CD8-positive, alpha-beta T cell (primary cell): ENCODE measurements at regions of chr2 and their contacts with region 1.

Region 1: GRCh38 chr2:178163395-178163794 is 30.9 kb upstream of the OSBPL6 start:
- DNase-seq: no peak
- ATAC-seq: no peak
- H3K4me3 ChIP-seq: no peak overlapping the region
- H3K4me3 Mint-ChIP-seq: no peak overlapping the region
- H3K27ac ChIP-seq: no peak overlapping the region
- H3K27ac Mint-ChIP-seq: no peak overlapping the region
- H3K4me1 ChIP-seq: no peaks in the 10 kb centered on the region
- H3K4me1 Mint-ChIP-seq: no peaks in the 10 kb centered on the region
- H3K27me3 ChIP-seq: no peaks in the 10 kb centered on the region
- H3K27me3 Mint-ChIP-seq: peaks cover 10% of the 10 kb centered on the region
- CTCF ChIP-seq: no peak

Region 2: GRCh38 chr2:176601066-176601465 is 1562.3 kb before region 1 on chr2:
- CTCF ChIA-PET with region 1: no interaction called
- POLR2A ChIA-PET with region 1: no interaction called
- intact Hi-C with region 1: loop called in 1 of 2 experiments (anchors 5 kb)
- DNase-seq: no peak
- ATAC-seq: no peak
- H3K4me3 ChIP-seq: no peak overlapping the region
- H3K4me3 Mint-ChIP-seq: no peak overlapping the region
- H3K27ac ChIP-seq: no peak overlapping the region
- H3K27ac Mint-ChIP-seq: no peak overlapping the region
- H3K4me1 ChIP-seq: no peaks in the 10 kb centered on the region
- H3K4me1 Mint-ChIP-seq: no peaks in the 10 kb centered on the region
- H3K27me3 ChIP-seq: peaks cover 0 to 6% of the 10 kb centered on the region in 2 experiments
- H3K27me3 Mint-ChIP-seq: peaks cover 31% of the 10 kb centered on the region
- CTCF ChIP-seq: no peak

Region 3: GRCh38 chr2:178177066-178177679 is 13.8 kb after region 1 on chr2:
- CTCF ChIA-PET with region 1: no interaction called
- POLR2A ChIA-PET with region 1: no interaction called
- intact Hi-C with region 1: no loop called
- DNase-seq: no peak
- ATAC-seq: no peak
- H3K4me3 ChIP-seq: no peak overlapping the region
- H3K4me3 Mint-ChIP-seq: no peak overlapping the region
- H3K27ac ChIP-seq: no peak overlapping the region
- H3K27ac Mint-ChIP-seq: no peak overlapping the region
- H3K4me1 ChIP-seq: no peaks in the 10 kb centered on the region
- H3K4me1 Mint-ChIP-seq: no peaks in the 10 kb centered on the region
- H3K27me3 ChIP-seq: no peaks in the 10 kb centered on the region
- H3K27me3 Mint-ChIP-seq: peaks cover 17% of the 10 kb centered on the region
- CTCF ChIP-seq: no peak